HepG2 (cell line): ENCODE measurements at regions of chr6 and their contacts with region 1.

Region 1: DNA sequence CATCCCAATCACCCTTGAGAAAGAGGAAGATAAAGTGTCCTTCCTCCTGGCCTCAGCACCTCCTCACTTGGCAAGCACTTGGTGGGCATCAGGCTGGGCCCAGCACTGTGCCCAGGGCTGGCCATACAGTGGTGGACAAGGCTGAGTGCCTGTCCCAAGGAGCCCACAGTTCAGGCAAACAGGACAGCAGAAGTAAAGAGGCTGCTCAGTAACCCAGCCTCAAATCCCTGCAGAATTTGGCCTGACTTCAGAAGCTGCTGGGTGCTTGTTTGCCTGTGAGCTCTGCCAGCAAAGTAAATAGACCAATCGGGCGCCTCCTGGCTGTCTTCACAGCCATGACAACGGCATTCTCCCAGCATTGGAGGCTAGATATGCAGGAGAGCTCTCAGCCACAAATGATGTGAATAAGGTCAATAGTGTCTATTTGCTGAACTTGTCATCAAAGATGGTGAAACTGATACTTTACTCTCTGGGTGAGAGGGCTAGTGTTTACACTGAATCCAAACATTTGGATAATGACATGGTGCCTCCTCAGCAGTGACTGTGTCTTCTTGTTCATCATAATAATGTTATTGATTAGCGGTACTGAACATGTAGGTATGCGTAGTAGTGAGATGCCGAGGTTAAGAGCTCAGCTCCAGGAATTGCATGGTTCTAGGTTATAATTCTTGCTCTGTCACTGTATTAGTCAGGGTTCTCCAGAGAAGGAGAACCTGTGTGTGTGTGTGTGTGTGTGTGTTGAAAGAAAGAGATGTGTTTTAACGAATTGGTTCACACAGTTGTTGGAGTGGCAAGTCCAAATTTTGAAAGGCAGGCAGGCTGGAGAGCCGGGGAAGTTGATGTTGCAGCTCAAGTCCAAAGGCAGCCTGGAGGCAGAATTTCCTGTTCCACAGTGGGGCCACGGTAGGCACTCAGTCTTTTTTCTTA is 36.8 kb upstream of the FANCE start:
- DNase-seq: peak; percentile 99
- ATAC-seq: peak; percentile 92
- H3K4me3 ChIP-seq: no peak overlapping the region; a peak in 1 of 6 replicates
- H3K27ac ChIP-seq: peak overlapping the region; percentile 52
- H3K4me1 ChIP-seq: peaks cover 33% of the 10 kb centered on the region
- H3K27me3 ChIP-seq: no peaks in the 10 kb centered on the region
- CTCF ChIP-seq: peak; percentile 97
- EP300 ChIP-seq: peak; percentile 36 to 91; a peak in 3 of 4 replicates
- POLR2A ChIP-seq: no peak
- RAD21 ChIP-seq: peak; percentile 97

Region 2: GRCh38 chr6:35297601-35298481 is 117.5 kb before region 1 on chr6 and contains the start of gene DEF6:
- CTCF ChIA-PET with region 1: interaction called, 4 read pairs
- POLR2A ChIA-PET with region 1: interaction called, 3 read pairs
- in situ Hi-C with region 1: no loop called
- intact Hi-C with region 1: loop called (anchors 1 kb)
- DNase-seq: peak; percentile 88
- ATAC-seq: peak; percentile 95
- H3K4me3 ChIP-seq: peak within 1 kb of the TSS; percentile 55 to 81 (median 77)
- H3K27ac ChIP-seq: no peak within 1 kb of the TSS
- H3K4me1 ChIP-seq: peaks cover 26% of the 10 kb centered on the region
- H3K27me3 ChIP-seq: no peaks in the 10 kb centered on the region
- CTCF ChIP-seq: peak; percentile 100
- EP300 ChIP-seq: peak; percentile 46 to 56; a peak in 2 of 4 replicates
- POLR2A ChIP-seq: peak; percentile 64 to 74
- RAD21 ChIP-seq: peak; percentile 100
- total RNA-seq, gene DEF6: 9.6 and 10.0 TPM in 2 replicates

Region 3: GRCh38 chr6:35359751-35360348 is 55.5 kb before region 1 on chr6:
- CTCF ChIA-PET with region 1: no interaction called
- POLR2A ChIA-PET with region 1: interaction called, 3 read pairs
- in situ Hi-C with region 1: no loop called
- intact Hi-C with region 1: loop called (anchors 1 kb)
- DNase-seq: no peak
- ATAC-seq: peak; percentile 35
- H3K4me3 ChIP-seq: no peak overlapping the region
- H3K27ac ChIP-seq: peak overlapping the region; percentile 67
- H3K4me1 ChIP-seq: peaks cover 28% of the 10 kb centered on the region
- H3K27me3 ChIP-seq: no peaks in the 10 kb centered on the region
- CTCF ChIP-seq: no peak
- EP300 ChIP-seq: no peak
- POLR2A ChIP-seq: no peak
- RAD21 ChIP-seq: no peak

Region 4: GRCh38 chr6:35386989-35387388 is 28.3 kb before region 1 on chr6:
- CTCF ChIA-PET with region 1: no interaction called
- POLR2A ChIA-PET with region 1: no interaction called
- in situ Hi-C with region 1: no loop called
- intact Hi-C with region 1: loop called (anchors 1 kb)
- DNase-seq: no peak
- ATAC-seq: no peak; the same call in 2 of the 3 replicates
- H3K4me3 ChIP-seq: no peak overlapping the region
- H3K27ac ChIP-seq: no peak overlapping the region
- H3K4me1 ChIP-seq: peaks cover 23% of the 10 kb centered on the region
- H3K27me3 ChIP-seq: no peaks in the 10 kb centered on the region
- CTCF ChIP-seq: peak; percentile 21; the same call in 1 of the 2 replicates
- EP300 ChIP-seq: no peak
- POLR2A ChIP-seq: no peak
- RAD21 ChIP-seq: no peak

Region 5: DNA sequence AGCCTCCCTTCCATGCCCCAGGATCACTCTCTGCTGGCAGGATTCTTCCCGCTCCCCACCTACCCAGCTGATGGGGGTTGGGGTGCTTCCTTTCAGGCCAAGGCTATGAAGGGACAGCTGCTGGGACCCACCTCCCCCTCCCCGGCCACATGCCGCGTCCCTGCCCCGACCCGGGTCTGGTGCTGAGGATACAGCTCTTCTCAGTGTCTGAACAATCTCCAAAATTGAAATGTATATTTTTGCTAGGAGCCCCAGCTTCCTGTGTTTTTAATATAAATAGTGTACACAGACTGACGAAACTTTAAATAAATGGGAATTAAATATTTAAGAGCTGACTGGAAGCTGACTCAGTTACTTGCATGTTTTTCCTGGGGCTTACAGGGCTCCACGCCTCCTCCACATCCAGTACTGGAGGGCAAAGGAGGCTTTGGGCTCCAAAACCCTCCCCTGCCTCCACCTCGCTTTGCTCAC is 12.6 kb after region 1 on chr6:
- CTCF ChIA-PET with region 1: interaction called, 3 read pairs
- POLR2A ChIA-PET with region 1: interaction called, 13 read pairs
- in situ Hi-C with region 1: no loop called
- intact Hi-C with region 1: no loop called
- DNase-seq: no peak
- ATAC-seq: no peak; the same call in 2 of the 3 replicates
- H3K4me3 ChIP-seq: peak overlapping the region in 1 of 3 experiments; percentile 25; a peak in 1 of 6 replicates
- H3K27ac ChIP-seq: peak overlapping the region; percentile 37
- H3K4me1 ChIP-seq: peaks cover 33% of the 10 kb centered on the region
- H3K27me3 ChIP-seq: no peaks in the 10 kb centered on the region
- CTCF ChIP-seq: no peak
- EP300 ChIP-seq: no peak
- POLR2A ChIP-seq: no peak
- RAD21 ChIP-seq: no peak

Region 6: DNA sequence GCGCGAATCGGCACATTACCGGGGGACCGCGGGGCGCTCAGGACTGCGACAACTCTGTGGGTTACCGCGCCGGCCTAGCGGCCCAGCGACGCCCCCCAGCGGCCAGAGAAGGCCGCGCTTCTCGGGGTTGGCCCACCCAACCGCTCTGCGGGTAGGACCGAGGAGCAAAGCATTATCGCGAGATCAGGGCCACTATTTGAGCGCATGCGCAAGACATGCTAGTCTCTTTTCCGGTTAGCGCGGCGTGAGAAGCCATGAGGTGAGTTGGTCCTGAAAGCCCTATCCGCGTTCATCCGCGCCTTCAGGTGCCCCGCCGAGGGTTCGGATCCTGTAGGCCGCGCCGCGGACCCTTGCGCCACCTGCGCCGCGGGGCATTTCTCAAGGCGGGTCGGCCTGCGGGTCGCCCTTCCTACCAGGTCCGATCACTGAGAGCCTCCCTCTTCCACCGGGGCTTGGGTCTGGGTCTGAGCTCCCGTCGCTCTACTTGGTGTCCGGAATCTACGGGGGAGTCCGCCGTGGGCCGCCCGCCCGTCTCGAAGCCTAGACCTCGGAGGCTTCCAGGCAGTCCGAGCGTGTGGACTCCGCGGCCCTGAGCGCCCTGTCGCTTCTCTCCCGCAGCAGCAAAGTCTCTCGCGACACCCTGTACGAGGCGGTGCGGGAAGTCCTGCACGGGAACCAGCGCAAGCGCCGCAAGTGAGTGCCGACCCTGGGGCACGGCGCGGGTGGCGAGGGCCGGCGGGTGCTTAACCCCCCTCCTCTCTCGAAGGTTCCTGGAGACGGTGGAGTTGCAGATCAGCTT is 53.1 kb after region 1 on chr6 and contains the start of gene RPL10A:
- CTCF ChIA-PET with region 1: no interaction called
- POLR2A ChIA-PET with region 1: interaction called, 8 read pairs
- in situ Hi-C with region 1: no loop called
- intact Hi-C with region 1: loop called (anchors 1 kb)
- DNase-seq: peak; percentile 98
- ATAC-seq: peak; percentile 83
- H3K4me3 ChIP-seq: peak within 1 kb of the TSS; percentile 85 to 98 (median 86)
- H3K27ac ChIP-seq: peak within 1 kb of the TSS; percentile 92
- H3K4me1 ChIP-seq: peaks cover 49% of the 10 kb centered on the region
- H3K27me3 ChIP-seq: no peaks in the 10 kb centered on the region; a peak in 1 of 5 replicates
- CTCF ChIP-seq: peak; percentile 100
- EP300 ChIP-seq: peak in 1 of 2 experiments; percentile 50; a peak in 1 of 4 replicates
- POLR2A ChIP-seq: peak in 1 of 2 experiments; percentile 100; a peak in 2 of 4 replicates
- RAD21 ChIP-seq: peak; percentile 98
- total RNA-seq, gene RPL10A: 1,854 and 2,285 TPM in 2 replicates